ENCODE measurements at regions of chr20 and their contacts with region 1.

Region 1: GRCh38 chr20:64038565-64039292 is 2.7 kb downstream of the C20orf204 start:
- DNase-seq: peak; percentile 92
- H3K4me3 ChIP-seq: peak overlapping the region; percentile 42 to 57
- H3K27ac ChIP-seq: no peak overlapping the region
- H3K4me1 ChIP-seq: peaks cover 0 to 13% of the 10 kb centered on the region in 2 experiments; a peak in 1 of 4 replicates
- H3K27me3 ChIP-seq: no peaks in the 10 kb centered on the region
- CTCF ChIP-seq: peak; percentile 65
- EP300 ChIP-seq: no peak
- RAD21 ChIP-seq: peak; percentile 57

Region 2: GRCh38 chr20:63980806-63981728 is 57.7 kb before region 1 on chr20 and contains the start of gene PRPF6:
- CTCF ChIA-PET with region 1: interaction called, 41 read pairs
- POLR2A ChIA-PET with region 1: interaction called, 18 read pairs
- DNase-seq: peak; percentile 98
- H3K4me3 ChIP-seq: peak within 1 kb of the TSS; percentile 77 to 98
- H3K27ac ChIP-seq: peak within 1 kb of the TSS; percentile 89 to 90
- H3K4me1 ChIP-seq: peaks cover 12 to 24% of the 10 kb centered on the region in 2 experiments
- H3K27me3 ChIP-seq: no peaks in the 10 kb centered on the region
- CTCF ChIP-seq: peak; percentile 81
- EP300 ChIP-seq: 0 out of 4 replicates have a peak, but pooled peaks of 1 of the 2 experiments have one; percentile 8
- RAD21 ChIP-seq: no peak; the same call in 1 of the 2 replicates
- polyA plus RNA-seq, gene PRPF6: 50.1 and 59.1 TPM in 2 replicates

Region 3: DNA sequence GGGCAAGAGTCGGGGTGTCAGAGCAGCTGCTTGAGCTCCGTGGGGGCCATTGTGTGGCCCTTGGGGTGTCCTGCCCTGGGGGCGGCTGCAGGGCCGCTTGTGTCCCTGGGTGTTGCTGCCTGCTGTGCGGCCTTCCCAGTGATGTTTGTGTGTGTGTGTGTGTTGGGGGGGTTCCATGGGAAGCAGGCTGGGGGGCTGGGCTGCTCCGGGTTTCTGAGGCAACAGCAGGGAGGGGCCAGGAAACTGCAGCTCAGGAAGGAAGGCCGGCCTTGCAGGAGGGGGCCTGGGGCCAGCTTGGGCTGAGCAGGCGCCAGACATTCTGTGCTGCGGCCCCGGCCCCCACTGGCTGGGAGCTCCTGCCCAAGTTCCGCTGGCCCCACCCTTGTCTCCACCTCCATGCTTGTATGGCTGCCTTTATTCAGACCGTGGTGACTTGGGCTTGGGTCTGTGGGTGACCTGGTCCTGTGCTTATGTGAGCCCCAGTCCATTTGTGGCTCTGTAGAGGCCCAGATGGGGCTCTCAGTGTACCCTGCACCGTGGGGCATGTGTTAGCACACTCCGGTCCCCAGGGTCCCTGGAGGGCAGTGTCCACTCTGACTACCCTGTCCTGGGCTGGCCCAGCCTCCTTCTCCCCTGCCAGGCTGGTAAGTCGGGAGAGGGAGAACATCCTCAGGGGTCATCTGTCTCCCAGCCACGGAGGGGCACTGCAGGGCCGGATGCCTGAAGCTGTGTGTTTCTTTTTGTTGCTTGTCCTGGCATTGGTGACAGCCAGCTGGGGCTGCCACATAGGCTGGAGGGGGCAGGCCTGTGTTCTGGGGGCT is 15.3 kb after region 1 on chr20:
- CTCF ChIA-PET with region 1: interaction called, 85 read pairs
- POLR2A ChIA-PET with region 1: no interaction called
- DNase-seq: peak; percentile 79
- H3K4me3 ChIP-seq: no peak overlapping the region
- H3K27ac ChIP-seq: no peak overlapping the region
- H3K4me1 ChIP-seq: peaks cover 0 to 10% of the 10 kb centered on the region in 2 experiments; a peak in 1 of 4 replicates
- H3K27me3 ChIP-seq: peaks cover 6% of the 10 kb centered on the region; the same call in 1 of the 2 replicates
- CTCF ChIP-seq: peak; percentile 32
- EP300 ChIP-seq: no peak
- RAD21 ChIP-seq: peak; percentile 39

Region 4: DNA sequence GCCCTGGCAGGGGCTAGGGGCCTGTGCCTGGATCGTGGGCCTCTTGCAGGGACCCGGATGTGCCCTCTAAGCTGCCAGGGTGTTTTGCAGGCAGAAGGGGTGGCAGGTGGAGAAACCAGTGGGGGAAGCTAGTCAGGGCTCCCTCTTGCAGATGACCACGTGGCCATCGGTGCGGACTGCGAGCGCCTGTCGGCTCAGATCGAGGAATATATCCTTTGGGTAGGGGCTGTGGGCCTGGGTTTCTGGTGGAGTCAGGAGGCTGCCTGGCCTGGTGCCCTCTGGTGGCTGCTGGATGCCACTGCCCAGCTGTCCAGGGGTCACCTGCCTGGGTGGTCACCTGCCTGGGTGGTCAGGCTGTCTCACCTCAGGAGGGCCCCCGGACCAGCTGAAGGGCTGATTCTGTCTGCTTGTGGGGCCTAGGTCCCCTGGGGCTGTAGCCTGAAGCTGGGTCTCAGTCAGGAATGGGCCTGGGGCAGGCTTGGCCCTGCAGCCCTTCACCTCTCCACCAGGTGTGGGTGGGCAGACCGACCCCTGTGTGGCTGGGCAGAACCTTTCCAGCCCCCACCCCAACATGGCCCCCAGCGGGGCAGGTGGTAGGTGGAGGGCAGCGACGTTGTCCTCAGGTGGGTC is 31.0 kb after region 1 on chr20:
- CTCF ChIA-PET with region 1: interaction called, 12 read pairs
- POLR2A ChIA-PET with region 1: no interaction called
- DNase-seq: peak; percentile 89
- H3K4me3 ChIP-seq: no peak overlapping the region; a peak in 1 of 4 replicates
- H3K27ac ChIP-seq: no peak overlapping the region
- H3K4me1 ChIP-seq: peaks cover 0 to 4% of the 10 kb centered on the region in 2 experiments; a peak in 1 of 4 replicates
- H3K27me3 ChIP-seq: no peaks in the 10 kb centered on the region
- CTCF ChIP-seq: peak; percentile 76
- EP300 ChIP-seq: no peak
- RAD21 ChIP-seq: peak; percentile 41

Region 5: DNA sequence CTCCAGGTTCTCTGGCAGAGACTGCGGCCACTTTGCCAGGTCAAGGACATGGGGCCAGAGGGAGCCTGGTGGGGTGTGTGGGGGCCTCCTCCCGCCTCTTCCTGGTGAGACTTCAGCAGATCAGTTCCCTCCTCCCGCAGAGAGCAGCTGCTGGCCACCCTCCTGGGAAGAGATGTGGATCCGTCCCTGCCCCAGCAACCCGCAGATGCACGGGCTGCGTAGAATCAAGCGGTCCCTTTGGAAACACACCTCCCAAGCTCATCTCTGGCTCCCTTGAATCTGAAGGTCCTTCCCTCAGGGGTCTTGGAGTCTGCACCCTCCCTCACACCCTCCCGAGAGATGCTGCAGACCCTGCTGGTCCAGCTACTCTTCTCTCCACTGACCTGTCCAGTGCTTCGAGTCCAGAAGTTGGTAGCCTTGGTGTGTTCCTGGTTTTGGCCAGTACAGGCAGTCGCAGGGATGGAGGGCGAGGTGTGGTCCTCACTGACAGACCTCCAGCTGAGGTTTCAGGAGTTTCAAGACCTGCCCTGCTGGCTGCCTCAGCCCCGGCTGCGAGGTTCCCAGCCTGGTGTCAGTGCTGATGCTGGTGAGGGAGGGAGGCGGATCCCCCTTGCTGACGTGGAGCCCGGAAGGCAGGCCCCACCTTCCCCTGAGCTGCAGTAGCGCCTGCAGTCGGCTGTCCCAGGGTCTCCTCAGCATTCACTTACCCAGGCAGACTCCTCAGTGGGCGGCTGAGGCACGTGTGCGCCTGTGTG is 68.4 kb after region 1 on chr20 and contains the start of gene NPBWR2:
- CTCF ChIA-PET with region 1: interaction called, 13 read pairs
- POLR2A ChIA-PET with region 1: no interaction called
- DNase-seq: no peak
- H3K4me3 ChIP-seq: no peak within 1 kb of the TSS
- H3K27ac ChIP-seq: no peak within 1 kb of the TSS
- H3K4me1 ChIP-seq: peaks cover 0 to 18% of the 10 kb centered on the region in 2 experiments; a peak in 1 of 4 replicates
- H3K27me3 ChIP-seq: no peaks in the 10 kb centered on the region; the same call in 1 of the 2 replicates
- CTCF ChIP-seq: no peak
- EP300 ChIP-seq: no peak
- RAD21 ChIP-seq: no peak
- polyA plus RNA-seq, gene NPBWR2: not detected in 2 replicates

Region 6: GRCh38 chr20:64176548-64176947 is 137.8 kb after region 1 on chr20:
- CTCF ChIA-PET with region 1: no interaction called
- POLR2A ChIA-PET with region 1: no interaction called
- DNase-seq: no peak
- H3K4me3 ChIP-seq: no peak overlapping the region
- H3K27ac ChIP-seq: no peak overlapping the region
- H3K4me1 ChIP-seq: peaks cover 0 to 4% of the 10 kb centered on the region in 2 experiments; a peak in 1 of 4 replicates
- H3K27me3 ChIP-seq: no peaks in the 10 kb centered on the region
- CTCF ChIP-seq: no peak
- EP300 ChIP-seq: no peak
- RAD21 ChIP-seq: no peak